Ascending aorta (tissue), 2 donors: ENCODE measurements at regions of chr12 and their contacts with region 1.

Region 1: DNA sequence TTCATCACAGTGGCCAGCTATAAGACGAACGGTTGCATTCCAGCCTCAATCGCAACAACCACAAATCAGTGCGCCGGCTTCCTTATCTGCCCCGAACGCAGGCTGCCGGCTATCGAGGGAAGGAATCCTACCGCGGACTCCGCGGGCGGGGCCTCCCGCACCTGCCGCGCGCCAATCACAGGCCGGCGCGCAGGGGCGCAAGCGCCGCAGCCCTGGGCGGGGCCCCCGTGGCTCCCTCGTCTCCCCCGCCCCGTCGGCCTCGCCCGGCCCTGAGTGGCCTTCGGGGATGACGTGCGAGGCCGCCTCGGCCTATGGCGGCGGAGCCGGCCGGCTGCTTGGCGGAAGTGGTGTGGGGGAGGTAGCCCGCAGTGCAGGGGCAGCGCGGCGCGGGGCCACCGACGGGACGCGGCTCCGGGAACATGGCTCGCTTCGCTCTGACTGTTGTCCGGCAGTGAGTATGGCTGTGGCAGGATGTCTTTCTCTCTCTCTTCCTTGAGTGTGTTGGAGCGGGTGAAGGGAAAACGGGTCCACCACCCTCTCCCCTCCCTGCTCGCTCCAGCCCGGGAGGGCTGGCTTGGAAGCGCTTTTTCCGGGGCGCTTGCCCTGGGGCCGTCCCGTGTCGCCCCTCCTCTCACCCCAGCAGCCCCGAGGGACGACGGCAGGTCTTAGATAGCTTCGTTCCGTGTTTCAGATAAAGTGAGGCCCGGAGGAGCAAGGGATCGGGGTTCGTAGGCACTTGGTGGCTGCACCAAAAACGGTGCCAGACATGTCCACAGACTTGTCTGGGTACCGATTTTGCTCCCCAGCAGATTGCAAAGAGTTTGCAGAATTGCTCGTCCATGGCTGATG is at the start of gene TIGAR:
- DNase-seq: peak; percentile 84 to 96
- H3K4me3 ChIP-seq: peak within 1 kb of the TSS; percentile 84 to 88
- H3K27ac ChIP-seq: peak within 1 kb of the TSS; percentile 76 to 93
- H3K4me1 ChIP-seq: peaks cover 4% of the 10 kb centered on the region in 2 donors
- H3K27me3 ChIP-seq: no peaks in the 10 kb centered on the region
- CTCF ChIP-seq: no peak
- total RNA-seq, gene TIGAR: 4.4 TPM

Region 2: GRCh38 chr12:3872800-3873636 is 448.1 kb before region 1 on chr12 and contains the start of gene PARP11:
- intact Hi-C with region 1: loop called (anchors 1 kb)
- DNase-seq: peak; percentile 93 to 99
- H3K4me3 ChIP-seq: peak within 1 kb of the TSS; percentile 49 to 80
- H3K27ac ChIP-seq: peak within 1 kb of the TSS; percentile 93 to 94
- H3K4me1 ChIP-seq: peaks cover 4 to 13% of the 10 kb centered on the region in 2 donors
- H3K27me3 ChIP-seq: no peaks in the 10 kb centered on the region
- CTCF ChIP-seq: no peak
- total RNA-seq, gene PARP11: 4.2 TPM

Region 3: DNA sequence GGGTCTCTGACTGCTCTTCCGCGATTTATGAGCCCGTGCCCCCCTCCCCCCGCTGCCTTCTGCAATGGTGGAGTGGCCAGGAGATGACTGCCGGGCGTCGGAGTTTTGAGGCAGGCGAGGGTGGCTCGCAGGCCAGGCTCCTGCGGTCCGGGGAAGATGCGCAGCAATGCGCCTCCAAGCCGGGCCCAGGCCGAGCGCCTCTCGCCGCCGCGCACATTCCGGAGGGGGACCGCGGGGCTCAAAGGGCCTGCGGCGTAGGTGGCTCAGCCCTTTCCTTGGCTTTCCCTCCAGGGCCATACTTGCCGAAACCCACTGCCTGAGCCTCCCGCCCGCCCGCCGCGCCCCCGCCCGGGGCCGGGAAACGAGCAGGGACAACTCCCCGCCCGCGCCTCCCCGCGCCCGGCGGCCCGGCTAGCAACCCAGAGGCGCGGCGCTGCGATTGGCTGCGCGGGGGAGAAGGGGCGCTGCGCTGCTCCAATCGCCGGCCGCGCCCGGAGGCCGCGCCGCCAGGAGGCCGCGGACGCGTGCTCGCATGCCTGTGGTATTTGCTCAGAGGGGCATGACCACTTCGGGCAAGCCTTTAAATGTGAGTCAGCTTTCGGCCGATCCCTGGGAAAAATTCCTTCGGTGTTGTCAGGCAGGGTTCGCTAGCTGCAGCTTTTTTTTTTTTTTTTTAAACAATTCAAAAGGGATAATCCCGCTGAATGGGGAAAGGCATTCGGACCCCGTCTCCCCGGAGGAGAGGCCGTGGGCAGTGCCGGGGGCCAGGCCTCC is 290.0 kb before region 1 on chr12:
- intact Hi-C with region 1: loop called (anchors 1 kb)
- DNase-seq: peak; percentile 81 to 97
- H3K4me3 ChIP-seq: peak overlapping the region; percentile 51 to 77
- H3K27ac ChIP-seq: peak overlapping the region; percentile 87 to 90
- H3K4me1 ChIP-seq: peaks cover 5 to 6% of the 10 kb centered on the region in 2 donors
- H3K27me3 ChIP-seq: no peaks in the 10 kb centered on the region
- CTCF ChIP-seq: peak in 1 of 3 experiments; percentile 6

Region 4: GRCh38 chr12:4269279-4269991 is 51.6 kb before region 1 on chr12:
- intact Hi-C with region 1: loop called (anchors 2 kb)
- DNase-seq: peak in 1 of 2 donors; percentile 92
- H3K4me3 ChIP-seq: peak overlapping the region; percentile 78 to 87
- H3K27ac ChIP-seq: peak overlapping the region; percentile 83 to 89
- H3K4me1 ChIP-seq: peaks cover 6 to 26% of the 10 kb centered on the region in 2 donors
- H3K27me3 ChIP-seq: no peaks in the 10 kb centered on the region
- CTCF ChIP-seq: peak in 2 of 3 experiments; percentile 23 to 35

Region 5: GRCh38 chr12:4370265-4370664 is 49.2 kb after region 1 on chr12:
- intact Hi-C with region 1: no loop called
- DNase-seq: no peak
- H3K4me3 ChIP-seq: no peak overlapping the region
- H3K27ac ChIP-seq: no peak overlapping the region
- H3K4me1 ChIP-seq: no peaks in the 10 kb centered on the region
- H3K27me3 ChIP-seq: no peaks in the 10 kb centered on the region
- CTCF ChIP-seq: no peak

Region 6: DNA sequence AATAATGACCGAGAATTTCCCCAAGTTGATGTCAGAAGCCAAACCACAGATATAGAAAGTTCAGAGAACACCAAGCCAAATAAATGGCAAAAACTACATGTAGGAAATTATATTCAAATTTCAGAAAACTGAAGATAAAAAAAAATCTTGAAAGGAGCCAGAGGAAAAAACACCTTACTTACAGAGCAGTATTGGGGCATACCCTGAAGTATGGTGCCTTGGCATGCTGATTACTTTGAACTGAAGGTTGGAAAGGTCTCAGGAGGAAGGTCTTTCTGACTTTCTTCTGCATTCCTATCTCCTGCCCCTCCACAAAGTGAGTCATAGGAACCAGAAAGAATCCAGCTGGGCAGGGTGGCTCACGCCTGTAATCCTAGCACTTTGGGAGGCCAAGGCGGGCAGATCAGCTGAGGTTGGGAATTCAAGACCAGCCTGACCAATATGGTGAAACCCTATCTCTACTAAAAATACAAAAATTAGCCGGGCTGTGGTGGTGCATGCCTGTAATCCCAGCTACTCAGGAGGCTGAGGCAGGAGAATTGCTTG is 133.3 kb after region 1 on chr12:
- intact Hi-C with region 1: no loop called
- DNase-seq: no peak
- H3K4me3 ChIP-seq: no peak overlapping the region
- H3K27ac ChIP-seq: no peak overlapping the region
- H3K4me1 ChIP-seq: no peaks in the 10 kb centered on the region
- H3K27me3 ChIP-seq: no peaks in the 10 kb centered on the region
- CTCF ChIP-seq: no peak

Region 7: GRCh38 chr12:4648501-4649357 is 327.7 kb after region 1 on chr12 and contains the starts of genes AKAP3 and NDUFA9:
- intact Hi-C with region 1: loop called (anchors 2 kb)
- DNase-seq: peak; percentile 10 to 87
- H3K4me3 ChIP-seq: peak within 1 kb of the TSS; percentile 72 to 87
- H3K27ac ChIP-seq: peak within 1 kb of the TSS; percentile 86
- H3K4me1 ChIP-seq: peaks cover 8 to 15% of the 10 kb centered on the region in 2 donors
- H3K27me3 ChIP-seq: no peaks in the 10 kb centered on the region
- CTCF ChIP-seq: no peak
- total RNA-seq, gene AKAP3: 2.8 TPM
- total RNA-seq, gene NDUFA9: 1.5 TPM